Tibial artery (tissue), 4 donors: ENCODE measurements at regions of chr5 and their contacts with region 1.

Region 1: GRCh38 chr5:43602461-43603343 is at the start of gene NNT:
- DNase-seq: peak; percentile 78 to 86
- H3K4me3 ChIP-seq: peak within 1 kb of the TSS; percentile 76 to 93
- H3K27ac ChIP-seq: peak within 1 kb of the TSS; percentile 93 to 95
- H3K4me1 ChIP-seq: peaks cover 0 to 30% (median 6%) of the 10 kb centered on the region in 4 donors
- H3K27me3 ChIP-seq: no peaks in the 10 kb centered on the region
- CTCF ChIP-seq: no peak

Region 2: DNA sequence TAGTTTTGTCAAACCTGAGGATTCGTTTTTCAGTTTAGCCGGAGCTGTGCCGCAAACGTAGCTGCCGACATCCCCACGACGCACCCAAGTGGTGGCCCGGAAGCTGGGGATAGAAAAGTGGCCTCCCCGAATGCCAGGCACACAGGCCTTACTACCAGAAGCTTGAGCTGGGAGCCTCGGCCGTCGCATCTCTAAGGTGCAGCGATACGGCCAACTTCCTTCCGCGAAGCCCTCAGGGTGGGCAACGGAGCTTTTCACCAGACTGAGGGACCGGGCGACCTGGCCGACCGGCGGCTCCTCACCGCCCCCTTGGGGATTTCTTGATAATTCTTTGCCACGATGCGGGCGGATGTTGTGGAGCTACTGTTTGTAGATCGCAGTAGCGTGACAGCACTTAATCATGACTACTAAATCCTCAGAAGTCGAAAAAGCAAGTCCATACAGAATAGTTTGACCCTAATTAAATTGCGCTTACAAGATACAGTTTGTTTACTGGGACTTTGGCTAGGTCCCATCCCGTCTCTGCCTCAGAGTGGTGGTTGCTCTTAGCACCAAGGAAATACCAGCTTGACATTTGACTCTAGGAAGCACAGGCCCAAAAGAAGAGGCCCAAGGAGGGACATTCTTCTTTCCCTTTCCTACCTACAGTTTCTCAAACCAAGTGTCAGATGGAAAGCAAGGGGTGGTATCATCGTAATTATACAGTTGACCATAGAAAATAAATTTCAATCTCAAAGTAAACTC is 118.4 kb before region 1 on chr5:
- intact Hi-C with region 1: loop called (anchors 10 kb)
- DNase-seq: peak; percentile 75 to 88
- H3K4me3 ChIP-seq: peak overlapping the region; percentile 65 to 83
- H3K27ac ChIP-seq: peak overlapping the region; percentile 91 to 95
- H3K4me1 ChIP-seq: peaks cover 0 to 18% (median 14%) of the 10 kb centered on the region in 4 donors
- H3K27me3 ChIP-seq: no peaks in the 10 kb centered on the region
- CTCF ChIP-seq: peak; percentile 55 to 71

Region 3: DNA sequence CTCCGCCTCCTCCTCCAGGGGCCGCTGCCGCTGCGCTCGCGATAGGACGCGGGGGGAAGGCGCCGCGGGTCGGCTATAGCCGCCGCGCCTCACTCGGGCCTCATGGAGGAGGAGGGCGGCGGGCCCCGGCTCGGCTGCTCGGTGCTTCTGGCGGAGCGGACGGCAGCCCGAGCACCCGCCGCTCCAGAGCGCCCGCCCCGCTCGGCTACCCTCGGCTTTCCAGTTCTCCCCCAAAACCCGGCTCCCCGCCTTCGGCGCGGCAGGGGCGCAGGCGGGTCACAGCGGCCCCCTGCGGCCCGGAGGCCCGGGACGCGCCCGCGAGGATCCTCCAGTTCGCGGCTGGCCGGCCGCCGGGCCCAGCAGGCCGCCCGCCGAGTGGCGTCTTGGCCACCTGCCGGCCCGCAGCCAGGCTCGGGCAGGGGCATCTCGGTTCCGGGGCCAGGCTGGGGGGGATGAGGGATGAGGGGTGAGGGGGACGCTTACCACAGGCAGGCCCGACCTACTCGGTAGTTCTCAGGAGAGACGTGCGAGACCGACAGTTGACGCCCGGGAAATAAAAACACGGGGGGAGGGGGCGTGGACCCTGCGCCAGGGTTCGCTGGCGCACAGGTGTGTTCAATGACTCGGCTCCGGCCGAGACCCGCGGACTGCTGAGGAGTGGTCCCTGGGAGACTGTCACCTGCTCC is 45.7 kb before region 1 on chr5 and contains the start of gene PAIP1:
- intact Hi-C with region 1: loop called (anchors 2 kb)
- DNase-seq: peak; percentile 78 to 90
- H3K4me3 ChIP-seq: peak within 1 kb of the TSS; percentile 69 to 92
- H3K27ac ChIP-seq: peak within 1 kb of the TSS; percentile 94 to 97
- H3K4me1 ChIP-seq: peaks cover 0 to 47% (median 24%) of the 10 kb centered on the region in 4 donors
- H3K27me3 ChIP-seq: no peaks in the 10 kb centered on the region
- CTCF ChIP-seq: peak; percentile 58 to 64

Region 4: DNA sequence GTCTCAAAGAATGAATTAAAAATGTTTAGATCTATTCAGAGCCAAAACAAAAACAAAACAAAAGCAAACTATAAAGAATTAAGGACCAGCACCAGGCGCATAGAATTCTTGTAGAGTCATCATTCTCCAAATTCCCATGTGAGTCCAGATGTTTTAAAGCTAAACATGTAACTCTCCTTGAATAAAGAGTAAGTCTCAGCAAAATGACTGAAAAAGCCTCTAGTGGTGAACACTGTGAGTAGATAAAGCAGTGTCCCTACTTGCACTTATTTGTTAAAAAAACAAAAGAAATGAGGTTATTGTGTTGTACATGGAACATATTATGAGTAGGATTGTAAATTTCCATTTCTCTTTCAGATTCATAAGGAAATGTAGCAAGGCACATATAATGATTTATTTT is 44.3 kb after region 1 on chr5:
- intact Hi-C with region 1: no loop called
- DNase-seq: no peak
- H3K4me3 ChIP-seq: no peak overlapping the region
- H3K27ac ChIP-seq: no peak overlapping the region
- H3K4me1 ChIP-seq: peaks cover 0 to 57% (median 27%) of the 10 kb centered on the region in 4 donors
- H3K27me3 ChIP-seq: no peaks in the 10 kb centered on the region
- CTCF ChIP-seq: no peak